ENCODE measurements at regions of chrX and their contacts with region 1.

Region 1: DNA sequence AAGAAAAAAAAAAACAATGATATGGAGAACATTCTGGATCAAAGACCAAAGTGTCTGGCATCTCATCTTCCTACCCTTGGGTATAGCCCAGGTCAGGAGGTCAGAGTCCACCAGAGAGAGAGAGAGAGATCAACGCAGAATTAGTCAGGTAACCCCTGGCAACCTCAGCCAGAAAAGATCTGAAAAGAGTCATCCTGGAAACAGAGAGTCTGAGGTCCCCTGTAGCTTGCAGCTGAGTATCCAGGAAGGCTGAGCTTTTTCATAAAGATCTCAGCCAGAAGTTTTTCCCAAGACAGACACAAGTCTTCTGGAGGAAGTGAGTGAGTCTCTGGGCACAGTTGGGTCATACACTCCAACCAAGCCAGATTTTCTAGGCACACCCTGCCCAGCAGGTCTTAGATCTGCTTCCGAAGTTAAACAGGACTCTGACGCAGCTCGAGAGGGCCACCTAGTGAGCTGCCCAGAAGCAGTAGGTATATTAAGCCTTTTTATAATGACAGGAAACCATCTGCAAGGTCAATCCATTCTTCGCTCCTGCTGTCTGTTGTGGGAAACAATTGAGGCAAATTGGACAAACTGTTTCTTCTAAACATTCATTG is 35.7 kb downstream of the ACE2 start:
- DNase-seq: peak; percentile 70
- H3K4me3 ChIP-seq: no peak overlapping the region
- H3K27ac ChIP-seq: no peak overlapping the region
- H3K4me1 ChIP-seq: no peaks in the 10 kb centered on the region
- H3K27me3 ChIP-seq: peaks cover 37% of the 10 kb centered on the region
- CTCF ChIP-seq: peak; percentile 76

Region 2: DNA sequence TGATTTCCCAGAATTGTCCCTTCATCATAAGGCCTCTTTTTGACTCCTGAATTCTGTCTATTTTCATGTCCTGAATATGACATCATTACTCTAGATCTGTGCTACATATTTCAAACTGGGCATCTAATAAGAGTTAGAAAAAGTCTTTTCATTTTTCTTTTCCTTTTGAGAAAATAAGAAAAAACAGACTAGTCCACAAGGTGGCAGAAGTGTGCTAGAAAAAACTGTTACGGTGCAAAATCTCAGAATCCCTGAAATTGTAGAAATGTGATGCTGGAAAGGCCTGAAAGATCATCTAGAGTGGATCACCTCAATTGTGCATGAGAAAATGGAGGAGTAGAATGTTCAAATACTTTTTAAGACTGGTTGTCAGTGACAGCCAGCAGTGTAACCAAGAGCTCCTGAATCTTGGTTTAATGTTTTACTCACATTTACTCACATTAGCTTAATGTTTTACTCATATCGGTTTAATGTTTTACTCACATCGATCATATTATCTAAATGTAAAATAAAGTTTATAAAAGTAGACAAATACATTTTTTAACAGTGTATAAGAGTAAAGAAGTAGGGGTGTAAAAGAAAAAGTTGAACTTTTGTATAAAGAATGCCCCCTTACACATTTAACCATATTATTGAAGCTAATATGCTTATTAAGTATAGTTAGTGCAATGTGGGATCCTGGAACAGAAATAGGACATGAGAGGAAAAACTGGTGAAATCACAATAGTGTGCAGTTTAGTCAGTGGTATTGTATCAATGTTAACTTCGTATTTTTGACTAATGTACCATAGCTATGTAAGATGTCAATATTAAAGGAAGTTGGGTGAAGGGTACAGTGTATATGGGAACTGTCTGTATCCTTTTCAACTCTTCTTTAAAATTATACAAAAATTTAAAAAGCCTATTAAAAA is 264.9 kb before region 1 on chrX:
- CTCF ChIA-PET with region 1: no interaction called
- POLR2A ChIA-PET with region 1: no interaction called
- intact Hi-C with region 1: loop called (anchors 5 kb)
- DNase-seq: peak; percentile 65
- H3K4me3 ChIP-seq: no peak overlapping the region
- H3K27ac ChIP-seq: no peak overlapping the region
- H3K4me1 ChIP-seq: peaks cover 17% of the 10 kb centered on the region
- H3K27me3 ChIP-seq: no peaks in the 10 kb centered on the region
- CTCF ChIP-seq: peak; percentile 64

Region 3: DNA sequence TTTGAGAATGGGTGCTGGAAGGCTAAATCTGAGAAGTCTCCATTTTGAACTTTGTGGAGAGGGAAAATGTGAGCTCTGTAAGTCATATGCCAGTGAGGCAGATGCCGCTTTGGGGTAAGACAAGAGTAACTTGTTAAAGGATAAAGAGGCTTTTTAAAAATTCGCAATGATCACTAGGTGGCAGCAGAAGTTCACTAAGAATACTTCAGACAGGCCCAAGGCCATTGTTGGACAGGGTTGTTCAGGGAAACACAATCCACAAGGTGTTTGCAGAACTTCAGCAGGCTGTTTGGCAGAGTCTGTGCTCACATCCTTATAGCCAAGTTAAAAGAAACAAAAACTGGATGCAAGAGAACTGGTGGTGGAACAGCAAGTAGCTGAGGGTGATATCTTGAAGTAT is 216.0 kb before region 1 on chrX:
- CTCF ChIA-PET with region 1: no interaction called
- POLR2A ChIA-PET with region 1: no interaction called
- intact Hi-C with region 1: loop called (anchors 1 kb)
- DNase-seq: peak; percentile 82
- H3K4me3 ChIP-seq: no peak overlapping the region
- H3K27ac ChIP-seq: no peak overlapping the region
- H3K4me1 ChIP-seq: no peaks in the 10 kb centered on the region
- H3K27me3 ChIP-seq: peaks cover 3% of the 10 kb centered on the region
- CTCF ChIP-seq: peak; percentile 69

Region 4: GRCh38 chrX:15471016-15471415 is 94.1 kb before region 1 on chrX:
- CTCF ChIA-PET with region 1: interaction called, 3 read pairs
- POLR2A ChIA-PET with region 1: no interaction called
- intact Hi-C with region 1: loop called (anchors 1 kb)
- DNase-seq: peak; percentile 81
- H3K4me3 ChIP-seq: no peak overlapping the region
- H3K27ac ChIP-seq: no peak overlapping the region
- H3K4me1 ChIP-seq: peaks cover 6% of the 10 kb centered on the region
- H3K27me3 ChIP-seq: no peaks in the 10 kb centered on the region
- CTCF ChIP-seq: peak; percentile 89

Region 5: GRCh38 chrX:15493118-15493962 is 71.7 kb before region 1 on chrX and contains the start of gene PIR:
- CTCF ChIA-PET with region 1: no interaction called
- POLR2A ChIA-PET with region 1: no interaction called
- intact Hi-C with region 1: loop called (anchors 1 kb)
- DNase-seq: peak; percentile 88
- H3K4me3 ChIP-seq: peak within 1 kb of the TSS; percentile 52
- H3K27ac ChIP-seq: peak within 1 kb of the TSS; percentile 78
- H3K4me1 ChIP-seq: no peaks in the 10 kb centered on the region
- H3K27me3 ChIP-seq: no peaks in the 10 kb centered on the region
- CTCF ChIP-seq: peak; percentile 70
- total RNA-seq, gene PIR: 58.0 and 74.2 TPM in 2 replicates

Region 6: GRCh38 chrX:15498741-15499140 is 66.3 kb before region 1 on chrX:
- CTCF ChIA-PET with region 1: interaction called, 19 read pairs
- POLR2A ChIA-PET with region 1: no interaction called
- intact Hi-C with region 1: loop called (anchors 1 kb)
- DNase-seq: no peak
- H3K4me3 ChIP-seq: no peak overlapping the region
- H3K27ac ChIP-seq: no peak overlapping the region
- H3K4me1 ChIP-seq: no peaks in the 10 kb centered on the region
- H3K27me3 ChIP-seq: peaks cover 37% of the 10 kb centered on the region
- CTCF ChIP-seq: no peak

Measured in A673 (cell line).